ENCODE measurements at regions of chr20 and their contacts with region 1.

Region 1: GRCh38 chr20:431012-431904 is 23.2 kb downstream of the RBCK1 start:
- DNase-seq: no peak
- H3K4me3 Mint-ChIP-seq: peak overlapping the region; percentile 58
- H3K27ac Mint-ChIP-seq: peak overlapping the region; percentile 86
- H3K4me1 Mint-ChIP-seq: peaks cover 47% of the 10 kb centered on the region
- H3K27me3 Mint-ChIP-seq: no peaks in the 10 kb centered on the region

Region 2: GRCh38 chr20:235891-236290 is 195.4 kb before region 1 on chr20:
- intact Hi-C with region 1: loop called (anchors 1 kb)
- DNase-seq: no peak
- H3K4me3 Mint-ChIP-seq: no peak overlapping the region
- H3K27ac Mint-ChIP-seq: no peak overlapping the region
- H3K4me1 Mint-ChIP-seq: peaks cover 13% of the 10 kb centered on the region
- H3K27me3 Mint-ChIP-seq: peaks cover 1% of the 10 kb centered on the region

Region 3: DNA sequence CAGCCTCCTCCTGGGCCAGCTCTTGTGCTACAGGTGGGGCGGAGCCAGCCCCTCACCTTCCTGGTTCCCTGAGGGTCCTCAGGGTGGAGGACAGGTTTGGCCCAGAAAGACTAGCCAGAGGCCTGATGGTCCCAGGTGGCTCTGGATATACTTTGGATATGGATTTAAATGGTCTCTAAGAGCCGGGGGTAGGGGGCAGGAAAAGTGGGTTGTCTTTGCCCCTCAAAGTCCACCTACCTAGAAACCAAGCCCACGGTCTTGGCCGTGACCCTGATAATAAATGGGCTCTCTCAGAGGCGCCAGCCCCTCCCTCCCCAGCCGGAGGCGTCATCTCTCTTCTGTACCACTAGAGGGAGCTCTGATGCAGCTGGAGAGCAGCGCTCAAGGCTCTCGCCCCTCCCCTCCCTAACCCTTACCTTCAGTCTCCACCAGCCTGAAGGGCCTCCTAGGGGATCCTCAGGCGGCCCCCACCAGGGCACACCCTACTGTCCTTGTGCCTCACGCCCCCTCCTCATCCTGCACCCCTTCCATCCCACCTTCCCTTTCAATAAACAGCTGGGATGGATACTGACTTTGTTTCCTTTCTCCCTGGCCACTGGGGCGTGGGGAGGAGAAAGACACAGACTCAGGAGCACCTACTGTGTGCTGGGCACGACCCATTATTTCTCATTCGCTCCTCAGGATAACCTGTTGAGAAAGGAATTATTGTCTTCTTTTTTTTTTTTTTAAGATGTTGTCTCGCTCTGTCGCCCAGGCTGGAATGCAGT is 76.8 kb before region 1 on chr20:
- intact Hi-C with region 1: loop called (anchors 1 kb)
- DNase-seq: peak; percentile 74
- H3K4me3 Mint-ChIP-seq: no peak overlapping the region
- H3K27ac Mint-ChIP-seq: no peak overlapping the region
- H3K4me1 Mint-ChIP-seq: peaks cover 4% of the 10 kb centered on the region
- H3K27me3 Mint-ChIP-seq: no peaks in the 10 kb centered on the region

Region 4: DNA sequence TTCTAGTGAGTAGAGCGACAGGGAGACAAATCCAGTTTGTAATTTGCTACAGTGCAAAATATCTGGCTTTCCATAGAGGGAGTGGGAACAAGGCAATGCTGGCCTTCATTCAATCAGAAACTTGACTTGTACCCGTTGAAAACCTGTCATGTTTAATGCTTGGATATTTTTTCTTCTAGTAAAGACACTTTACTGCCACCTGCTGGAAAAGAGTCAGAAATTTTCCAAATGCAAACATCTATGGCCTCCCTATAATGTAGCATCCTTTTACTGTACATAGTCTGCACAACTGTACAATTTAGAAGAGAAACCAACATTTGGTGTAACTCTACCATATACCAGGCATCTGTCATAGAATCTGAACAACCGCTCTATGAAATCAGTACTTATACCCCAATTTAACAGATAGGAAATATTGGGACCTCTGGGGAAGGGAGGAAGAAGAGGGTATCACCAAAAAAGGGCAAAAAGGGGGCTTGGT is 47.7 kb after region 1 on chr20:
- intact Hi-C with region 1: loop called (anchors 2 kb)
- DNase-seq: no peak
- H3K4me3 Mint-ChIP-seq: no peak overlapping the region
- H3K27ac Mint-ChIP-seq: no peak overlapping the region
- H3K4me1 Mint-ChIP-seq: peaks cover 13% of the 10 kb centered on the region
- H3K27me3 Mint-ChIP-seq: no peaks in the 10 kb centered on the region